HEK293 (cell line): ENCODE measurements at regions of chr12 and their contacts with region 1.

Region 1: DNA sequence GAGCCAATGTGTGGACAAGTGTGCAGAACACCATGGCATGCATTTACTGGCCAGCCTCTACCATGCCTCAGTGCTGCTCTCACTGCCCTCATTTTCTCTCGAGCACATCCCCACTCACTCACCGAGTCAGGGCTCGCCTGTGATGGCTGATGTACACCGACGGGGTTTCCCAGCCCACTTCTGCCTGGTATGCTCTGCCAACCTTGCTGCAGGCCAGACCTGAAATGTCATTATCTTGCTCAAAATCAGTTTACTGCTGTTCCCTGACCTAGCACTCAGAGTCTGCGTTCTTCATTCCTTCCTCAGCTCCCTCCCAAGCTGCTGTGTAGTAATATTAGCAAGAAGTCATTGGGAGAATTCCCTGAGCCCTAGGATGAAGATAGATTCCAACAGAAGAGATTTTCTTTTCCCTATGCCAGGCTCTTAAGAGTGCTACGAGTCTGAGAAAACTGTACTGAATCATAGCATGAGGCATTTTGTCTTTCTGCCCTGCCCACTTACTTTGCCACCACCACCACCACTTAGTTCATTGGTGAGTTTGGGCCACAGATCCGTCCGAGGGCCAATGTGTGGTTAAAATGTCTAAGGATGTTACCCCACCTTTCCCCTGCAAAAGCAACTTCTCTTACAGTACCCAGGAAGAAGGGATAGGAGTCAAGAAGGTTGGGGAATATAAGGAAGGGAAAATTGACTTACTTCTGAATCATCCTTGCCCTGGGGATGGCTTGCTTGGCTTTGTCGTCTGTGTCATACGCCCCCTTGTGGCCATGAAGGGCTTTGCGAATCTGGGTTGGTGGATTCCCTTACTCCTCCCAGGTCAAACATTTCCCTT is 51.0 kb downstream of the BMAL2 start:
- H3K4me3 ChIP-seq: no peak overlapping the region
- H3K27ac ChIP-seq: no peak overlapping the region
- H3K4me1 ChIP-seq: no peaks in the 10 kb centered on the region
- CTCF ChIP-seq: peak; percentile 50; the same call in 1 of the 2 replicates

Region 2: DNA sequence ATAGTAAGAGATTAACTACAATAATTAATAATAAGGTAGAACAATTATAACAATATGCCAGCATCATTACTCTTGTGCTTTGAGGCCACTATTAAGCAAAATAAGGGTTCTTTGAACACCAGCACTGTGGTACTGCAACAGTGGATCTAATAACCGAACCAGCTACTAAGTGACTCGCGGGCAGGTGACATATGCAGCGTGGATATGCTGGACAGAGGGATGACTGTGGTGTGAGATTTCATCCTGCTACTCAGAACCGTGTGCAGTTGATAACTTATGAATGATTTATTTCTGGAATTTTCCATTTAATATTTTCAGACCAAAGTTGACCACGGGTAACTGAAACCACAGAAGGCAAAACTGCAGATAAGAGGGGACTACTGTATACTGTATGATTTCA is 16.6 kb before region 1 on chr12:
- CTCF ChIA-PET with region 1: interaction called, 17 read pairs
- POLR2A ChIA-PET with region 1: no interaction called
- H3K4me3 ChIP-seq: no peak overlapping the region
- H3K27ac ChIP-seq: no peak overlapping the region
- H3K4me1 ChIP-seq: no peaks in the 10 kb centered on the region
- CTCF ChIP-seq: no peak

Region 3: GRCh38 chr12:27398466-27398865 is 14.8 kb after region 1 on chr12:
- CTCF ChIA-PET with region 1: interaction called, 12 read pairs
- POLR2A ChIA-PET with region 1: no interaction called
- H3K4me3 ChIP-seq: no peak overlapping the region
- H3K27ac ChIP-seq: no peak overlapping the region
- H3K4me1 ChIP-seq: no peaks in the 10 kb centered on the region
- CTCF ChIP-seq: no peak